Sigmoid colon (tissue), 7 donors: ENCODE measurements at regions of chr15 and their contacts with region 1.

Region 1: DNA sequence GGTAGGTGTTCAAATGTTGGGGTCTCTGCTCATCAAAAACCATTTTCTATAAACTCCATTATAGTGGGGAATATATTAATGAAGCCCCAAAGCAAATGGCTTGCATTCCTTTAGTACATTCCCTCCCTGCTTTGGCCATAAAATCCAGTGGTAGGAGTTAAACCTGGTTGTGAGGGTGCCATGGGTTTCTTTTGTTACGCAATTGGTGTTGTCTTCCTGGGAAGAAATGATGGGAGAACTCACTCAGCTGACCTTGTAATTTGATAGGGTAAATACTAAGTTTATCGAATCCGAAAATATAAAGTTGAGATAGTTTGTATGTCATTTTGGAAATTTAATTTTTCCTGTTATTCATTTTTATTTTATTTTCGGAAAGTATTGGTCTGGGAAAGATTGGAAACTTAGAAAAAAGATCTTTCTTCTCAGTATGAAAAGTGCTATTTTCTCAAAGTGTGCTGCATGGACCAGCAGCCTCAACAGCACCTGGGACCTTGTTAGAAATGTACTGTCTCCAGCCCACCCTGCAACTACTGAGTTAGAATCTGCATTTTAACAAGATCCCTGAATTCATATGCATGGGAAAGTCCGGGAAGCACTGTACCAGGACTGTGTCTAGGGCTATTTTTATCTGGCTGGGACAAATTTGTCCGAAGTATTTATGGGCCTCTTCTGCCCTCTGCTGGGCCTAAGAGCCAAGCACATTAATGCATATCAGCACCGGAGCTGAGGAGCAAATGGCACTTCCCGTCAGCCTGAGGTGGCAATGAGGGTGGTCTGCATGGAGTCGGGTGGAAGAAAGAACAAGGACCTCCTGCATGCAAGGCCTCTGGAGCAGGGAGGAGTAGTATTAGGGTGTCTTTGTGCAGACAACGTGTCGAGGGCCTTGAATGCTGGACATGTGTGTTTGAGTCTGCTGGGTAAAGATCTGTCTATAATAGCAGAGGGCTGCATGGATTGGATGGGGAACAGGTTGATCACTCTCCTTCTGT is 54.7 kb downstream of the FAM81A start:
- DNase-seq: peak; percentile 69
- H3K4me3 ChIP-seq: no peak overlapping the region
- H3K27ac ChIP-seq: no peak overlapping the region
- H3K4me1 ChIP-seq: peaks cover 0 to 7% (median 5%) of the 10 kb centered on the region in 4 donors
- H3K27me3 ChIP-seq: no peaks in the 10 kb centered on the region
- CTCF ChIP-seq: peak; percentile 72 to 83 (median 79)
- EP300 ChIP-seq: no peak
- POLR2A ChIP-seq: no peak

Region 2: GRCh38 chr15:58980351-58980939 is 512.2 kb before region 1 on chr15:
- intact Hi-C with region 1: loop called (anchors 2 kb)
- DNase-seq: no peak
- H3K4me3 ChIP-seq: no peak overlapping the region
- H3K27ac ChIP-seq: peak overlapping the region in 2 of 4 donors; percentile 14 to 58
- H3K4me1 ChIP-seq: peaks cover 0 to 11% (median 7%) of the 10 kb centered on the region in 4 donors
- H3K27me3 ChIP-seq: no peaks in the 10 kb centered on the region
- CTCF ChIP-seq: peak; percentile 22 to 33 (median 24)
- EP300 ChIP-seq: no peak
- POLR2A ChIP-seq: no peak

Region 3: GRCh38 chr15:59158701-59159034 is 334.0 kb before region 1 on chr15:
- intact Hi-C with region 1: loop called (anchors 5 kb)
- DNase-seq: no peak
- H3K4me3 ChIP-seq: no peak overlapping the region
- H3K27ac ChIP-seq: no peak overlapping the region
- H3K4me1 ChIP-seq: no peaks in the 10 kb centered on the region
- H3K27me3 ChIP-seq: no peaks in the 10 kb centered on the region
- CTCF ChIP-seq: no peak
- EP300 ChIP-seq: no peak
- POLR2A ChIP-seq: no peak

Region 4: GRCh38 chr15:59174835-59175831 is 317.6 kb before region 1 on chr15:
- intact Hi-C with region 1: loop called (anchors 2 kb)
- DNase-seq: peak; percentile 66
- H3K4me3 ChIP-seq: no peak overlapping the region
- H3K27ac ChIP-seq: peak overlapping the region in 2 of 4 donors; percentile 43 to 56
- H3K4me1 ChIP-seq: peaks cover 0 to 15% (median 5%) of the 10 kb centered on the region in 4 donors
- H3K27me3 ChIP-seq: no peaks in the 10 kb centered on the region
- CTCF ChIP-seq: peak; percentile 14 to 56 (median 48)
- EP300 ChIP-seq: no peak
- POLR2A ChIP-seq: no peak

Region 5: DNA sequence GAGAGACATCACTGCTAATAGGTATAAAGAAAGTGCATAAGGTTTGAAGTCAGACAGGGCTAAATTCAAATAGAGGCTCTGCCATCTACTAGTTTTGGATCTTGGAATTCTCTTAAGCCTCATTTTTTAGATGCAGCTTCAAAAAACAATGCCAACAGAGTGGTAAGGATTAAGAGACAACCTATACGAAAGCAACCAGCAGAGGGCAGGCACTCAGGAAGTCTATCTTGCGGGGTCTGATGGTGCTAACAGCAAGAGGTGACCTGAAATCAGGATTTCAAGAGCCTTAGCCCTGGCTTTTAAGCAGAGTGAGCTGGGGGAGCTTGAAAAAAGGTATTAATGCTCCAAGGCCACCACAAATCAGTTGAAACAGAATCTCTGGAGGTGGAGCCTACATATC is 245.3 kb before region 1 on chr15:
- intact Hi-C with region 1: loop called (anchors 5 kb)
- DNase-seq: no peak
- H3K4me3 ChIP-seq: no peak overlapping the region
- H3K27ac ChIP-seq: no peak overlapping the region
- H3K4me1 ChIP-seq: no peaks in the 10 kb centered on the region
- H3K27me3 ChIP-seq: no peaks in the 10 kb centered on the region
- CTCF ChIP-seq: peak in 3 of 4 experiments; percentile 34 to 39 (median 38)
- EP300 ChIP-seq: no peak
- POLR2A ChIP-seq: no peak